GM12878 (cell line): ENCODE measurements at regions of chr11 and their contacts with region 1.

Region 1: DNA sequence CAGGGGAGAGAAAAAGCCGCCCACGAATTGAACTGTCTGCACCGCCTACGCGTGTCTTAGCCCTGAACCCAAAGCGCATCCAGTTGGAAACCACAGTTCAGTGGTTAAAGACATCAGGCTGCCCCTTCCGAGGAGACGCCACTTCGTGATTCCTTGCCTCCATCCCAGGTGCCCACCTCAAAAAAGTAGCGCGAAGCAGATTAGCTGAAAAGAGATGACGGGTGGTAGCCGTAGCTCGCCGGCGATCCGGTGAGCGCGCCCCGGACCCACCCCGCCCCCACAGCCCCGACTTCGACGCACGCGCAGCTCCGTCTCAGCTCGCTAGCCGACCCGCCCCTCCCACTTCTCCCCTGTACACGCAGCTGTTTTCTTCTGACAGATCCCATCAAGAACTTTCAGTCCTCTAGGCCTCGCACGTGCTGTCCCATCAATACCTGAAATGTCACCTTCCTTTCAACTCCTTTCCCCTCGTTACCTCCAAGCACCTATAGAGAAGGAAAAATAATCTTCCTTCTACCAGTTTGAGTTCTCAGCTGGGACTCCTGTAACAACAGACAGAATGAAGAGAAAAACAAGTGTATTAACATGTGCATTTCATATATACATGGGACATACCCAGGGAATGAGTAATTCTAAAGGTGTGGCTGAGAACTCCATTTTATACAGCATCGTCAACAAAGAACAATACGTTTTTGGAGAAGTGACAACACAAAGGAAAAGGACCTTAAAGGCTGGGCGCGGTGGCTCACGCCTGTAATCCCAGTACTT is 49.5 kb downstream of the OR4D9 start:
- DNase-seq: peak; percentile 51
- ATAC-seq: peak; percentile 56
- H3K4me3 ChIP-seq: peak overlapping the region; percentile 59
- H3K27ac ChIP-seq: peak overlapping the region; percentile 73
- H3K4me1 ChIP-seq: peaks cover 4% of the 10 kb centered on the region; the same call in 1 of the 2 replicates
- H3K27me3 ChIP-seq: no peaks in the 10 kb centered on the region
- CTCF ChIP-seq: no peak
- EP300 ChIP-seq: no peak
- POLR2A ChIP-seq: peak; percentile 56
- RAD21 ChIP-seq: no peak

Region 2: DNA sequence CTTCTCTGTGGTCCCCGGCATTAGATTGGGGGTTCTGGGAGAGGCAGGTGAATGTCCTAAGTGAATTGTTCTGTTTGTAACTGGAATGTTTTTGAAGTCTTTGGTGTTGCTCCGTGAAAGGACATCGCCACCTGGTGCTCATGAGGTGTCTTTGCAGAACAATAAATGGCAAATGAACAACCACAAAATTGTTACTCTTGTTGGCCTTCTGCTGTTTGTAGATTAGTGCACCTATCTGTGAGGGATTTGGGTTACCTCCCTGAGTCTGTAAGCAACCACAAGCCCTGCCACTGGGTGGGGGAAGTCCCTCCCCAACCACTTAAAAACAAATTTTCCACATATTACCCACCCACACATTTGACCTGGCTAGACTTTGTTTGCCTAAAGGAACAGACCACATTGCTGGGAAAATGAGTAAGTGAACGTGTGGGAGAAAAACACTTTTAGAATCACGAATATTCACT is 352.9 kb before region 1 on chr11:
- CTCF ChIA-PET with region 1: no interaction called
- POLR2A ChIA-PET with region 1: no interaction called
- RAD21 ChIA-PET with region 1: no interaction called
- SMC1A ChIA-PET with region 1: no interaction called
- in situ Hi-C with region 1: loop called (anchors 10 kb)
- intact Hi-C with region 1: loop called (anchors 5 kb)
- DNase-seq: peak; percentile 89
- ATAC-seq: peak; percentile 77
- H3K4me3 ChIP-seq: peak overlapping the region; percentile 64
- H3K27ac ChIP-seq: peak overlapping the region; percentile 76
- H3K4me1 ChIP-seq: peaks cover 51% of the 10 kb centered on the region
- H3K27me3 ChIP-seq: no peaks in the 10 kb centered on the region
- CTCF ChIP-seq: peak; percentile 74 to 87 (median 78); a peak in 5 of 6 replicates
- EP300 ChIP-seq: peak; percentile 62 to 68; a peak in 3 of 4 replicates
- POLR2A ChIP-seq: no peak
- RAD21 ChIP-seq: peak; percentile 77

Region 3: GRCh38 chr11:59550368-59550841 is 10.5 kb before region 1 on chr11:
- CTCF ChIA-PET with region 1: interaction called, 14 read pairs
- POLR2A ChIA-PET with region 1: interaction called, 7 read pairs
- RAD21 ChIA-PET with region 1: interaction called, 15 read pairs
- SMC1A ChIA-PET with region 1: interaction called, 14 read pairs
- in situ Hi-C with region 1: no loop called
- intact Hi-C with region 1: loop called (anchors 1 kb)
- DNase-seq: peak; percentile 96
- ATAC-seq: peak; percentile 96
- H3K4me3 ChIP-seq: peak overlapping the region; percentile 74
- H3K27ac ChIP-seq: peak overlapping the region; percentile 83
- H3K4me1 ChIP-seq: no peaks in the 10 kb centered on the region
- H3K27me3 ChIP-seq: no peaks in the 10 kb centered on the region
- CTCF ChIP-seq: peak; percentile 39 to 59 (median 57)
- EP300 ChIP-seq: peak in 1 of 2 experiments; percentile 57; a peak in 1 of 4 replicates
- POLR2A ChIP-seq: peak; percentile 40; the same call in 1 of the 2 replicates
- RAD21 ChIP-seq: no peak

Region 4: GRCh38 chr11:59668950-59669610 is 108.2 kb after region 1 on chr11 and contains the start of gene PATL1:
- CTCF ChIA-PET with region 1: interaction called, 3 read pairs
- POLR2A ChIA-PET with region 1: interaction called, 13 read pairs
- RAD21 ChIA-PET with region 1: interaction called, 9 read pairs
- SMC1A ChIA-PET with region 1: interaction called, 9 read pairs
- in situ Hi-C with region 1: no loop called
- intact Hi-C with region 1: loop called (anchors 1 kb)
- DNase-seq: peak; percentile 94
- ATAC-seq: peak; percentile 95
- H3K4me3 ChIP-seq: peak within 1 kb of the TSS; percentile 98
- H3K27ac ChIP-seq: peak within 1 kb of the TSS; percentile 86
- H3K4me1 ChIP-seq: no peaks in the 10 kb centered on the region; the same call in 1 of the 2 replicates
- H3K27me3 ChIP-seq: no peaks in the 10 kb centered on the region
- CTCF ChIP-seq: no peak
- EP300 ChIP-seq: peak; percentile 10 to 45; a peak in 2 of 4 replicates
- POLR2A ChIP-seq: peak; percentile 81
- RAD21 ChIP-seq: no peak
- polyA plus RNA-seq, gene PATL1: 5.3 to 5.9 TPM

Region 5: GRCh38 chr11:59698506-59698905 is 137.6 kb after region 1 on chr11:
- CTCF ChIA-PET with region 1: no interaction called
- POLR2A ChIA-PET with region 1: no interaction called
- RAD21 ChIA-PET with region 1: no interaction called
- SMC1A ChIA-PET with region 1: no interaction called
- in situ Hi-C with region 1: no loop called
- intact Hi-C with region 1: no loop called
- DNase-seq: no peak
- ATAC-seq: no peak
- H3K4me3 ChIP-seq: no peak overlapping the region
- H3K27ac ChIP-seq: no peak overlapping the region
- H3K4me1 ChIP-seq: no peaks in the 10 kb centered on the region
- H3K27me3 ChIP-seq: no peaks in the 10 kb centered on the region
- CTCF ChIP-seq: no peak
- EP300 ChIP-seq: no peak
- POLR2A ChIP-seq: no peak
- RAD21 ChIP-seq: no peak

Region 6: GRCh38 chr11:59778122-59778521 is 217.2 kb after region 1 on chr11:
- CTCF ChIA-PET with region 1: no interaction called
- POLR2A ChIA-PET with region 1: no interaction called
- RAD21 ChIA-PET with region 1: no interaction called
- SMC1A ChIA-PET with region 1: no interaction called
- in situ Hi-C with region 1: no loop called
- intact Hi-C with region 1: no loop called
- DNase-seq: no peak
- ATAC-seq: no peak
- H3K4me3 ChIP-seq: no peak overlapping the region
- H3K27ac ChIP-seq: no peak overlapping the region
- H3K4me1 ChIP-seq: no peaks in the 10 kb centered on the region
- H3K27me3 ChIP-seq: no peaks in the 10 kb centered on the region
- CTCF ChIP-seq: no peak
- EP300 ChIP-seq: no peak
- POLR2A ChIP-seq: no peak
- RAD21 ChIP-seq: no peak